ENCODE measurements at regions of chr5 and their contacts with region 1.

Region 1: DNA sequence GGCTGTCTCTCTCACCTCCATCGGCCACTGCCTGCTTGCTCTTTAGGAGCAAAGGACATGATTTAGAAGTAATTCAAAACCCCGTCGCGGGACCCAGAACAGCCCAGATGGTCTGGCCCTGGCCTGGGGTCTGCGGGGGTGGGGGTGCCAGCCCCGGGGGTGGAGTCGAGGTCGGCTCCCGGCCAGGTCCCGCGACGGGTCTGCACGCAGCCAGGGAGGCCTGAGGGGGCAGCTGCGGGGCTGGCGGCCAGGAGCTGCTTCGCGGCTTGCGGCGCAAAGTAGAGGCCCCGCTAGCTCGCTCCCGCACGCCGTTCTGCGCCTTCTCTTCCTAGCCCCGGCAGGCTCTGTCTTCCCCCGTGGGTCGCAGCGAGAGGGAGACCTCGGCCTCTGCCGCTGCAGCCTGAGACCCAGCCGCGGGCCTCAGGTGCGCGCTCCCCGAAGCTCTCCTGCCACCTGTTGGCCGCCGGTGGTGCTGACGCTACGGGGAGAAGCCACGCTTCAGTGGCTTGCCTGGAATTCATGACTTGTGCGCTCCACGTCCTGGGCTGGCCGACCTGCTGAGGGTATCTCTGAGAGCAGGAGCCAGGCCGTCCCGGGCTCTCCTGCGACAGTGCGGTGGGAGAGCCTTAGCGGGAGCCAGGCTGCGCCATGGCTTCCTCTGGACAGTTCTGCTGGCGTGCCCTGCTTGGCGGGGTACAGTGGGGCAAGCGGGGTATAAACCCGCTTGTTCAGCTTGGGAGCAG is 157.2 kb upstream of the PITX1 start:
- DNase-seq: peak; percentile 63 to 83 (median 69)
- ATAC-seq: peak; percentile 80 to 97 (median 93)
- H3K4me3 ChIP-seq: peak overlapping the region in 11 of 12 donors; percentile 12 to 56 (median 46)
- H3K27ac ChIP-seq: no peak overlapping the region
- H3K4me1 ChIP-seq: peaks cover 0 to 17% (median 3%) of the 10 kb centered on the region in 12 donors
- H3K27me3 ChIP-seq: peaks cover 0 to 58% (median 20%) of the 10 kb centered on the region in 9 donors
- CTCF ChIP-seq: peak; percentile 74 to 88 (median 82)
- POLR2A ChIP-seq: no peak

Region 2: DNA sequence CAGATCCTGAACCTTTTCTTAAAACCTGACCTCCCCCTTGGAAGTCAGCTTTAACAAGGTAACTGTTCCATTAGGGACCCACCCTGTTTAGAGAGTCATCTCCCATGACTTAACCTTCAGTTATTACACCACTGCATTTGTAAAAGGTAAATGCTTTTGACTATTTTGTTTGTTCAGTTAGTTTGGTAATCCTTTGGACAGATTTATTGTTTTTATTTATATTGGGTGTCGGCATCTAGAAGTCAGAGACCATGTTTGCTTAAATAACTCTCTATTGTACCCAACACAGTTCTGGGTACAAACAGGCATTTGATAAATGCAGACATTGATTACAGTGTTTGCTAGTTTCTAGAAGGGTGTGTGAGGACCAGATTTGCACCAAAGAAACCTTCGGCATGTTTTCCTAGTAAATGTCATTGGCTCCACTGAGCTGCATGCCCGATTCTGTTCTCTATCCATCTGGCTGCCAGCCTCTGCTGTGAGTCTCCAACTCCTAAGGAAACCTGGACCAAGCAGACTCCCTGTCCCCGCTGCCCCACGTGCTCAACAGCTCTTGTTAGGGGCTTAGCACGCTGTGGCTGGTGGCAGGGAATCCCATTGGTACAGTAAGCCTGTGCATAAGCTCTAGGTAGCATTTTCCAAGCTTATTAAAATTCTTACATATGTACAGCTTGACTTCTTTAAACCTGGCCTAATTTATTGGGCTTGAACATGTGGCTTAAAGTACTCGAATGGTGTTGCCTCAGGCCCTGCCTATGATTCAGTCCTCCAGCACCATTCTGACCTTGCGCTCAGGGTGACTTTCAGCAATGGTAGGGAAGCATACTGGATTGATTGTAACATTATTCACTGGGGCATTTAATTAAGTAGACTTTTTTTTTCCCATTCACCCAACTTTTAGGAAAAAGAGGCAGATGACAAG is 279.7 kb before region 1 on chr5:
- intact Hi-C with region 1: loop called in 2 of 10 experiments (anchors 5 to 10 kb)
- DNase-seq: no peak
- ATAC-seq: no peak
- H3K4me3 ChIP-seq: no peak overlapping the region
- H3K27ac ChIP-seq: no peak overlapping the region
- H3K4me1 ChIP-seq: peaks cover 0 to 3% (median 0%) of the 10 kb centered on the region in 12 donors
- H3K27me3 ChIP-seq: no peaks in the 10 kb centered on the region
- CTCF ChIP-seq: no peak
- POLR2A ChIP-seq: no peak

Region 3: DNA sequence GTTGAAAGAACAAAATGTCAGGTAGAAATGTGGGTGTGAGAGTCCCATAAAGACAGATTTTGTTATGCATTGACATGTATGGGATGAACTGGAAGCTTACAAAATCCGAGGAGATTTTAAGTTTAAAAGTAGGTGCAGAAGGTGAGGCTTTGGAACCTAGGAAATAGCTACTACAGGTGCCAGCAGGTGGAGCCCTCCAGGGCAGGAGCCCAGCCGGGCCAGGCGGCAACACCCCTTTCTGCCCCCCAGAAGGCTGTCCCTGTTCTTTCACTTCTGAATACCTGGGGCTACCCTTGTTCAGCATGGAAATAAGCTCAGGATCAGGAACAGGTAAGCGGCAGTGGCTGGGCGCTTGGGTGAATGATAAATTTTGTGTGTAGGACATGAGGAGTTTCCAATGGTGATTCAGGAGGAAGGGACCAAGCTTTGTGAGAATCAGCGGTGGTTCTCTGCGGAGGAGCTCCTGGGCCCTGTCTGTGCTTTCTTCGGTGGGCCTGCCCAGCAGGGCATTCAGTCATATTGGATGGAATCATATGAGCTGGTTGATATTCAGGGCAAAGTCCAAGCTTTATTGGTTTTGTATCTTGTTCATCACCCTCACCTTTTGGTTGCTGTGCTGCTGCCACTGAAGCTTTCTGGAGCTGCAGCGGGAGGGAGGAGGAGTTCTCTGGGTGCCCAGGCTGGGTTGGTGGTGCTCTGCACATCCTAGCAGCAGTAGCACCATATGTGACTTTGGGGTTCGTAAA is 274.0 kb before region 1 on chr5:
- intact Hi-C with region 1: loop called in 2 of 10 experiments (anchors 5 to 10 kb)
- DNase-seq: no peak
- ATAC-seq: no peak
- H3K4me3 ChIP-seq: no peak overlapping the region
- H3K27ac ChIP-seq: no peak overlapping the region
- H3K4me1 ChIP-seq: no peaks in the 10 kb centered on the region
- H3K27me3 ChIP-seq: no peaks in the 10 kb centered on the region
- CTCF ChIP-seq: peak in 4 of 12 donors; percentile 14 to 19 (median 18)
- POLR2A ChIP-seq: no peak

Region 4: DNA sequence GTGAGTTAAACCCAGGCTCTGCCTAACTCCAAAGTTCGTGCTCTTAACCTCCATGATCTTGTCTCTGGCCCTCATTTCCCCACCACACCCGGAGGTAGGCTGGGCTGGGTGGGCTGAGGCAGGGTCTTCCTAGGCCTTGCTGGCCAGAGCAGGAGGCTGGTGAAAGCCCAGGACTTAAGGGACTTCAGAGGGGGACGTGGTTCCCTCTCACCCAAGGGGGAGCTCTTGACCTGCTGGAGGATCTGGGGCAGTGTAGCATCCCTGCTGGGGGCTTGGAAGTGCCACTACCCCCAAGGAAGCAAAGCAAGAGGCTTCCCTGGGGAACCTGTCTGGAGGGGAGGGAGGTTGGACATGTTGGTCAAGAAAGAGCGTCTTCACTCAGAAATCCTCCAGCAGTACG is 171.9 kb before region 1 on chr5:
- intact Hi-C with region 1: no loop called
- DNase-seq: peak in 1 of 5 donors; percentile 11
- ATAC-seq: no peak
- H3K4me3 ChIP-seq: no peak overlapping the region
- H3K27ac ChIP-seq: no peak overlapping the region
- H3K4me1 ChIP-seq: peaks cover 0 to 6% (median 0%) of the 10 kb centered on the region in 12 donors
- H3K27me3 ChIP-seq: peaks cover 0 to 3% (median 0%) of the 10 kb centered on the region in 9 donors
- CTCF ChIP-seq: no peak
- POLR2A ChIP-seq: no peak

Region 5: GRCh38 chr5:135039271-135040045 is 151.8 kb before region 1 on chr5:
- intact Hi-C with region 1: loop called in 1 of 10 experiments (anchors 5 kb)
- DNase-seq: peak in 1 of 5 donors; percentile 59
- ATAC-seq: peak in 2 of 4 donors; percentile 19 to 22
- H3K4me3 ChIP-seq: peak overlapping the region in 3 of 12 donors; percentile 3 to 20 (median 7)
- H3K27ac ChIP-seq: no peak overlapping the region
- H3K4me1 ChIP-seq: peaks cover 0 to 25% (median 12%) of the 10 kb centered on the region in 12 donors
- H3K27me3 ChIP-seq: peaks cover 58 to 98% (median 95%) of the 10 kb centered on the region in 9 donors
- CTCF ChIP-seq: no peak
- POLR2A ChIP-seq: no peak

Region 6: GRCh38 chr5:135310328-135310989 is 119.2 kb after region 1 on chr5:
- intact Hi-C with region 1: no loop called
- DNase-seq: no peak
- ATAC-seq: no peak
- H3K4me3 ChIP-seq: no peak overlapping the region
- H3K27ac ChIP-seq: no peak overlapping the region
- H3K4me1 ChIP-seq: no peaks in the 10 kb centered on the region
- H3K27me3 ChIP-seq: peaks cover 0 to 13% (median 0%) of the 10 kb centered on the region in 9 donors
- CTCF ChIP-seq: no peak
- POLR2A ChIP-seq: no peak

Region 7: GRCh38 chr5:135332519-135333150 is 141.4 kb after region 1 on chr5:
- intact Hi-C with region 1: loop called in 3 of 10 experiments (anchors 5 to 10 kb)
- DNase-seq: no peak
- ATAC-seq: peak in 1 of 4 donors; percentile 7
- H3K4me3 ChIP-seq: no peak overlapping the region
- H3K27ac ChIP-seq: no peak overlapping the region
- H3K4me1 ChIP-seq: peaks cover 0 to 19% (median 2%) of the 10 kb centered on the region in 12 donors
- H3K27me3 ChIP-seq: no peaks in the 10 kb centered on the region
- CTCF ChIP-seq: peak in 11 of 12 donors; percentile 18 to 59 (median 45)
- POLR2A ChIP-seq: no peak

Measured in heart left ventricle (tissue), 16 donors.